ENCODE measurements at regions of chr1 and their contacts with region 1.

Region 1: DNA sequence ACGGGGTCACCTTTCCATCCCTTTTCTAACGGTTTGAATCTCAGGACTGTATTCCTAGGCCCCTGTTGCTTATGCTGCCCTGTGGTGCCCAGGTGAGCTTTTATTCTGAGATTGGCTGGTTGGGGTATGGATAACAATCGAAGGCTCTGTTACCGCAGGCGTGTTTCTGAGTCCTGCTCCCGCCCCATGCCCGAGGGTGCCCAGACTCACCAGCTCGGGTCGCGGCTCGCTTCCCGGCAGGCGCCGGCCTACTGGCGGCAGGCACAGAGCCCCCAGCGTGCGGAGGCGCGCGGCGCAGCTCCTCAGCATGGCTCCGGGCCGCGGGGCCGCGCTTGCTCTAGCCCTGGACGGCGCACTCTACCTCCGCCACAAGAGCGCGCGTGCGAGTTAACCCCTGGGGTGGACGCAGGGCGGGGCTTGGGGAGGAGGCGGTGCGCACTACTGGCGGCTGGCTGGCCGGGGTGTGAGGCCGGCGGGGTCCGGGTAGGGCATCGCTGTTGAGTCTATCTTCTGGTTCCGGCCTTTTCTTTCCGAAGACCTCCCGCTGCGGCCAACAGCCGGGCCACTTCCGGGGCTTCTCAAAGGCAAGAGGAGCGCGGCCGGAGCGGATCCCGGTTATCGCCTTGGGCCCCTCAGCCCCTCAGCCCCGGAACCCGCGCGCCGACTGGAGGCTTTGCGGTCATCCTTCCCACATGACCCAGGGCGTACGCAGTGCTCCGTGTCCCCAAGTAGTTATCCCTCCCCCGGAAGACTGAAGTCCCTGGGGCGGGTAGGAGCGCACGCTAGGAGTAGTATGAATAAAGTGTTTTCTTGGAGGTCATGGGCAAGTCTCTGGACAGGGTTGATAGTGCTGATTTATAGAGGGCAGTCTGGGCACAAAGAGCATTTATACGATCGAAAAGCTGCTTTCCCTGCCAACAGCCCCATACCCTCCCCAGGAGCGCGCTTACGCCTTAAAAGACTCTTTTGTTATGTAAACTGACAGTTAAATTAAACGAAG is at the start of gene THEM4:
- DNase-seq: peak; percentile 95 to 99
- ATAC-seq: peak; percentile 99
- H3K4me3 ChIP-seq: peak within 1 kb of the TSS; percentile 56
- H3K27ac ChIP-seq: peak within 1 kb of the TSS; percentile 88 to 92
- H3K4me1 ChIP-seq: no peaks in the 10 kb centered on the region
- CTCF ChIP-seq: peak; percentile 21
- EP300 ChIP-seq: no peak
- POLR2A ChIP-seq: peak; percentile 90
- RAD21 ChIP-seq: peak in 1 of 2 experiments; percentile 38; a peak in 1 of 5 replicates
- polyA plus RNA-seq, gene THEM4: 28.1 and 32.3 TPM in 2 replicates

Region 2: DNA sequence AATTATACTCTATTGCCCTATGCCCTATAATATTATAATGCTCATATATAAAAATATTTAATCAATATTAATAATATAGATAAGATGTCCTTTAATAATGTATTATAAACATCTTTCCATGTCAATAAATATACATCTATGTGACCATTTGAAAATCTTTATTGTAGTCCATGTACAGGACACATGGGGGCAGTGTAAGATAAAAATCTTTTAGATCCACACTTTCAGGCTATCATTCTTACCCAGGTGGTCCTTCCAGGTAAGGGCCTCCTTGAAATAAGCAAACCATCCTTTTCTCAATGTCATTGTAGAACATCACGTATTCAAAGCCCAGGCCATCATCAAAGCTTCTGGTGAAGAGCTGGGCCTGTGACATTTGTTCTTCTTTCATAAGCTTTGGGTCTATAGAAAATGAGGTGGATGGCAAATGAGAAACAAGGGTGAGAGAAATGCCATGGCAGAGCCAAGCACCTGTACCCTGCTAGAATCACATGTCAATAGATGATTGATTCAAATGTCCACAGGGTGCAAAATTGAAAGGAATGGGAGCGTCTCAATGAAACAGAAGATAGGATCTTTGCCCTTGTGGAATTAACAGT is 20.4 kb before region 1 on chr1:
- CTCF ChIA-PET with region 1: interaction called, 13 read pairs
- POLR2A ChIA-PET with region 1: interaction called, 4 read pairs
- DNase-seq: peak; percentile 33 to 41
- ATAC-seq: peak; percentile 68 to 80; a peak in 3 of 6 replicates
- H3K4me3 ChIP-seq: no peak overlapping the region
- H3K27ac ChIP-seq: no peak overlapping the region
- H3K4me1 ChIP-seq: no peaks in the 10 kb centered on the region
- CTCF ChIP-seq: peak; percentile 67
- EP300 ChIP-seq: no peak
- POLR2A ChIP-seq: no peak
- RAD21 ChIP-seq: peak; percentile 70 to 72

Region 3: GRCh38 chr1:151898513-151898991 is 10.9 kb before region 1 on chr1:
- CTCF ChIA-PET with region 1: interaction called, 26 read pairs
- POLR2A ChIA-PET with region 1: interaction called, 7 read pairs
- DNase-seq: no peak
- ATAC-seq: no peak
- H3K4me3 ChIP-seq: no peak overlapping the region
- H3K27ac ChIP-seq: peak overlapping the region in 1 of 2 experiments; percentile 38; a peak in 2 of 6 replicates
- H3K4me1 ChIP-seq: peaks cover 11% of the 10 kb centered on the region
- CTCF ChIP-seq: no peak
- EP300 ChIP-seq: no peak
- POLR2A ChIP-seq: no peak
- RAD21 ChIP-seq: no peak

Measured in A549 (cell line).